ENCODE measurements at regions of chr1 and their contacts with region 1.

Region 1: GRCh38 chr1:89198491-89199072 is at the start of gene GBP4:
- DNase-seq: peak; percentile 81
- total RNA-seq, gene GBP4: 6.4 TPM

Region 2: GRCh38 chr1:89022167-89022959 is 176.2 kb before region 1 on chr1 and contains the start of gene GBP3:
- intact Hi-C with region 1: loop called (anchors 5 kb)
- DNase-seq: no peak
- total RNA-seq, gene GBP3: 6.6 TPM

Region 3: DNA sequence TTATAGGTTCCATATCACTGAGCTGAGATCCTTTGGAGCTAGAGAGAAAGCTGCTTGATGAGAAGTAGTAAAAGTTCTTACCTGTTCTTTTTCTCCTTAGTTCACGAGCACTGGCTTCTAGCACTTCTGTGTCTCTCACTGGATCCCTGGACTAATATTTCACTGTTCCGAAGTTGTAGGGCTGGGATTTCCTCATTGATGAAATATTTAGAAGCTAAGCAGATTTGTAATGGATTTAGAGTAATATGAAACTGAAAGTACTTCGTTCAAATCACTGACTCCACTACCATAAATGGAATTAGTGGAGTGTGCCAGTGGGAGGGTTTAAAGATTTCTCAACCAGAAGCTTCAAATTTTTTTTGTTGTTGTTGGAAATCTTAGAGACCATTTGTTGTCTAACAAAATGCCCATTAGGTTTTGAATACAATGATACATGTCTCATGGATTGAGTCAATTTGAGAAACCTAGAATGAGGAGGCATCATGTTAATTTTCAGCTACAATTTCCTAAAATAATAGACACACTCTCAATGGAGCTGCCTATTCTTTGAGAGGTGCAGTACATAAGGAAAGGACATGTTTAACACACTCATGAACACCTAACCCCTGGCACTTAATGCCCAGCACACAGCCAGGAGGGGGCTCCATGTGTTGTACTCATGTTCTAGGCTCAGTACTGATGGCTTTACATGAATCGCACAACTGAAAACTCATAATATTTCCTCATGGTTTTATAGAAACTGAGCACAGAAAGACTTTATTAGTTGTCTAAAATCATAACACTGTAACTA is 133.3 kb before region 1 on chr1 and contains the start of gene GBP1:
- intact Hi-C with region 1: loop called (anchors 2 kb)
- DNase-seq: no peak
- total RNA-seq, gene GBP1: 6.2 TPM

Region 4: GRCh38 chr1:89129911-89130310 is 68.7 kb before region 1 on chr1:
- intact Hi-C with region 1: loop called (anchors 2 kb)
- DNase-seq: no peak

Region 5: DNA sequence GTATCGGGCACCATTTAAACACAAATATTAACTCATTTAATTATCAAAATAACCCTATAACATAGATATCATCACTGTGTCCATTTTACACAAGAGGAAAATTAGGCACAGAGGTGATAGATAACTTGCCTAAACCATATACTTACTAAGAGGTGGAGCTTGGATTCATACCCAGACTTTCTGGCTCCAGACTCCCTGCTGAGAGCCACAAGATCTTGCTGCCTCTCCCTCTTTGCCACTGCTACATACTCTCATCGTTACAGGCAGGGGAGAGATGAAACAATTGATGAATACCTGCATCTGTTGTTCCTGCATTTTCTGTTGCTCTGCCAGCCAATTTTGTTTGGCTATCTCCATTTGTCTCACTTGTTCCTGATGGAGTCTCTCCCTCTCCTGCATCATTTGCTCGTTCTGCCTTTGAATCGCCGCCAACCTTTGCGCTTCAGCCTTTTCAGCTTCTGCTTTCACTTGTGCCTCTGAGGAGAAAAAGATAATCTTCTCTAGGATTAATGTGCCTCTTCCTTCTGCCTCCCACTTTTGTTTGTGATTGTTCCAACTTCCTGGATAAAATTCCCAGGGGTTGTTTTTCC is 63.4 kb after region 1 on chr1:
- intact Hi-C with region 1: loop called (anchors 5 kb)
- DNase-seq: no peak

Region 6: GRCh38 chr1:89358287-89358893 is 159.8 kb after region 1 on chr1:
- intact Hi-C with region 1: loop called (anchors 5 kb)
- DNase-seq: peak; percentile 81

Region 7: GRCh38 chr1:89391686-89392085 is 193.1 kb after region 1 on chr1:
- intact Hi-C with region 1: no loop called
- DNase-seq: no peak